ENCODE measurements at regions of chr1 and their contacts with region 1.

Region 1: GRCh38 chr1:167687919-167688519 is 33.8 kb upstream of the MPZL1 start:
- DNase-seq: peak; percentile 81
- H3K4me3 Mint-ChIP-seq: no peak overlapping the region
- H3K27ac Mint-ChIP-seq: peak overlapping the region; percentile 76
- H3K4me1 Mint-ChIP-seq: peaks cover 19% of the 10 kb centered on the region
- H3K27me3 Mint-ChIP-seq: no peaks in the 10 kb centered on the region

Region 2: DNA sequence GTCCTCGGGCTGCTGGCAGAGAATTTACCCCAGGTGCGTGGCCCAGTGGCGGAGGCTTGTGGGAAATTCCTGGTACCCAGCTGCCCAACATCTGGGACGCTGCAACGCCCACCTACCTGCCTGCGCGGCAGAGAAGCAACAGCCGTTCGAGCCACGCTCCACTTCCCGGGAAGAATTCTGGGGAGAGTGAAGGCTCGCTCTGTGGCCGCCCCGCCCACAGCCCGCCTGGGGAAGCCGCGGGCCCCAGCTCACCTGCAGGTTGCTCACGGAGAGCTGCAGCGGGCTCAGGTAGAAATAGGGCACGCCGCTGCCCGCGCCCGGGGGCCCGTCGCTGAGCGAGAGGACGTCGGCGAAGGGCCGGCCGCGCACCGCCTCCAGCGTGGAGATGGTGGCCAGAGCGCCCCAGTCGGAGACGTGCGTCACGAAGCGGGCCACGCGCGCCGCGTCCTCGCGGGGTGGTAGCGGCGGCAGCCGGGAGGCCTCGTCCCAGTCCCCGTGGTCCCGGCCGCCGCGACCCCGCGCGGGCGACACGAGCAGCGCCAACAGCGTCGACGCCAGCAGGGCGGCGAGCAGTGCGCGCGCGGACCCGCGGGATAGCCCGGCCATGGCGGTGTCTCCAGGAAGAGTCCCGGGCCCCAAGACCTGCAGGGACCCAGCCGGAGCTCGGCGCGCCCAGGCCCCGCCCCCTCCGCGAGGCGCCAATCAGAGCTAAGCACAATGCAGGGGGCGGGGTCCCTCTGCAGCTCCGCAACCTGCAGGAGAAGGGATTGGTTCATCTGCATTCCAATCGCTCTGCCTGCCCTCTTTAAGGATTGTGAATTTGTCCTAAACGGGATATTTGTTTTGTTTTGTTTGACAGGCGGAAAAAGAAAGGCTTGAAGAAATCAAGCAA is 134.6 kb before region 1 on chr1 and contains the start of gene CREG1:
- CTCF ChIA-PET with region 1: interaction called, 31 read pairs
- POLR2A ChIA-PET with region 1: interaction called, 3 read pairs
- intact Hi-C with region 1: loop called (anchors 1 kb)
- DNase-seq: peak; percentile 94
- H3K4me3 Mint-ChIP-seq: peak within 1 kb of the TSS; percentile 84
- H3K27ac Mint-ChIP-seq: no peak within 1 kb of the TSS
- H3K4me1 Mint-ChIP-seq: peaks cover 35% of the 10 kb centered on the region
- H3K27me3 Mint-ChIP-seq: no peaks in the 10 kb centered on the region
- total RNA-seq, gene CREG1: 13.5 to 14.6 TPM

Region 3: DNA sequence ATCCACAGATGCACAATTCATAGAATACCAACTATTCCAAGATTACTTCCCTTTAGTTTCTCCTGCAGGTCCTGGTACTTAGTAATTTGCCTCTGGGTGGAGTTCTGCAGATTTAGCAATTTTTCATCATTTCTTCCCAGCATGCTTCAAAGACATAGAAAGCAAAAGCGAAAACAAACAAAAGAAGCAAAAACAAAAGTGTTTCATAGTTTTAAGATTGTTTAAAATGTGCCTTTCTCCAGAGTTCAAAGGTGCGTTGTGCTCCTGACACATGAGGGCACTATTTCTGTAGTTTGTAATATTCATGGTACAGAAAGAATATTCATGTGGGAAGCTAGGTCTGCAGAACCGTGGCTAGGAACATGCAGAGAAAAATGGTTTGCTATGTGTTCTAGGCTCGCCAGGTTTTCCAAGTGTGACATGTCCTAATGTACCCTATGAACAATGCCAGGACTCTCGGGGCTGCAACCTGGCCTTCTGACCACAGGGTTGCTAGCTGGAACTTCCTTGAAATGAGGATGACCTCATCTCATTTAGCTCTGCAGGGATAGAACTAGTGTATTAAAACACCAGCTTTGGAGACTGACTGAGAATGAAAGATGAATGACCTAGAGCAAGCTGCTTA is 88.0 kb before region 1 on chr1:
- CTCF ChIA-PET with region 1: interaction called, 227 read pairs
- POLR2A ChIA-PET with region 1: interaction called, 14 read pairs
- intact Hi-C with region 1: loop called (anchors 1 kb)
- DNase-seq: peak; percentile 53
- H3K4me3 Mint-ChIP-seq: peak overlapping the region; percentile 61
- H3K27ac Mint-ChIP-seq: peak overlapping the region; percentile 64
- H3K4me1 Mint-ChIP-seq: peaks cover 37% of the 10 kb centered on the region
- H3K27me3 Mint-ChIP-seq: no peaks in the 10 kb centered on the region

Region 4: GRCh38 chr1:167627865-167628641 is 60.0 kb before region 1 on chr1:
- CTCF ChIA-PET with region 1: interaction called, 27 read pairs
- POLR2A ChIA-PET with region 1: interaction called, 5 read pairs
- intact Hi-C with region 1: loop called (anchors 2 kb)
- DNase-seq: peak; percentile 90
- H3K4me3 Mint-ChIP-seq: peak overlapping the region; percentile 92
- H3K27ac Mint-ChIP-seq: peak overlapping the region; percentile 99
- H3K4me1 Mint-ChIP-seq: peaks cover 46% of the 10 kb centered on the region
- H3K27me3 Mint-ChIP-seq: no peaks in the 10 kb centered on the region

Region 5: DNA sequence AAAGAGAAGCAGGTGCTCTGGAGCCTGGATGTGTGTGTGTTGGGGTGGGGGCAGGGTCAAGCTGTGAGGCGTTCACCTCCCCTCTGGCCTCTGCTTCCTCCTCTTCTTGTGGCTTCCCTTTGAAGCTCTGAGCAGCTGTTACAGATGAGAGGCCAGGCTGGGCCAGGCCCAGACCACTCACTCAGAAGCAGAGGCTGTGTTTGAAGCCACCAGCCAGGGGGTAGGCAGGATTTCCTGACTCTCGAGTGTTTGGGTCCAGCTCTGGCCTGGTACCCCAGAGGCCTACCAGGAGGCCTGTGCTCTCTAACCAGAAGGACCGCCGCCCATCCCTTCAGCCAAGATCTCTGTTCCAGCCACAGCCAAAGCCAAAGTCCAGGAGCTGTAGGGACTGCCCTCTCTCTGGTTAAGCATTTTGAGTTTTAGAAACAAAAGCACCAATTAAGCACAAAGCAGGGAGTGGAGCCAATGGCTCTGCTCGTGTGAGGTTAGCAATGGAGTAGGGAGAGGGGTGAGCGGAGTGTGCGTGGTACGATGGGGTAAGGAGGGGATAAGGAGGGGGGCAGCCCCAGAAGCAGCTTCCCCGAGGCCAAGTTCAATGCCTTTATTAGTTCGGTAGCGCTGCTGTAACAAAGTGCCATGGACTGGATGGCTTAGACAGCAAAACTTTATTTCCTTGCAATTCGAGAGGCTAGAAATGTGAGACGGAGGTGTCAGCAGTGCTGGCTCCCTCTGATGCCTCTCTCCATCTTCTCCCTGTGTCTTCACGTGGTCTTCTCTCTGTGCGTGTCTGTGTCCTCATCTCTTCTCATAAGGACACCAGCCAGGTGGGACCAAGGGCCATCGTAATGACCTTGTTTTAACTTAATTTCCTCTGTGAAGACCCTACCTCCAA is 37.5 kb before region 1 on chr1:
- CTCF ChIA-PET with region 1: interaction called, 9 read pairs
- POLR2A ChIA-PET with region 1: no interaction called
- intact Hi-C with region 1: loop called (anchors 2 kb)
- DNase-seq: peak; percentile 36
- H3K4me3 Mint-ChIP-seq: no peak overlapping the region
- H3K27ac Mint-ChIP-seq: peak overlapping the region; percentile 80
- H3K4me1 Mint-ChIP-seq: peaks cover 81% of the 10 kb centered on the region
- H3K27me3 Mint-ChIP-seq: no peaks in the 10 kb centered on the region

Region 6: GRCh38 chr1:167676205-167676915 is 11.7 kb before region 1 on chr1:
- CTCF ChIA-PET with region 1: interaction called, 38 read pairs
- POLR2A ChIA-PET with region 1: interaction called, 3 read pairs
- intact Hi-C with region 1: no loop called
- DNase-seq: peak; percentile 52
- H3K4me3 Mint-ChIP-seq: no peak overlapping the region
- H3K27ac Mint-ChIP-seq: peak overlapping the region; percentile 67
- H3K4me1 Mint-ChIP-seq: peaks cover 45% of the 10 kb centered on the region
- H3K27me3 Mint-ChIP-seq: no peaks in the 10 kb centered on the region

Region 7: DNA sequence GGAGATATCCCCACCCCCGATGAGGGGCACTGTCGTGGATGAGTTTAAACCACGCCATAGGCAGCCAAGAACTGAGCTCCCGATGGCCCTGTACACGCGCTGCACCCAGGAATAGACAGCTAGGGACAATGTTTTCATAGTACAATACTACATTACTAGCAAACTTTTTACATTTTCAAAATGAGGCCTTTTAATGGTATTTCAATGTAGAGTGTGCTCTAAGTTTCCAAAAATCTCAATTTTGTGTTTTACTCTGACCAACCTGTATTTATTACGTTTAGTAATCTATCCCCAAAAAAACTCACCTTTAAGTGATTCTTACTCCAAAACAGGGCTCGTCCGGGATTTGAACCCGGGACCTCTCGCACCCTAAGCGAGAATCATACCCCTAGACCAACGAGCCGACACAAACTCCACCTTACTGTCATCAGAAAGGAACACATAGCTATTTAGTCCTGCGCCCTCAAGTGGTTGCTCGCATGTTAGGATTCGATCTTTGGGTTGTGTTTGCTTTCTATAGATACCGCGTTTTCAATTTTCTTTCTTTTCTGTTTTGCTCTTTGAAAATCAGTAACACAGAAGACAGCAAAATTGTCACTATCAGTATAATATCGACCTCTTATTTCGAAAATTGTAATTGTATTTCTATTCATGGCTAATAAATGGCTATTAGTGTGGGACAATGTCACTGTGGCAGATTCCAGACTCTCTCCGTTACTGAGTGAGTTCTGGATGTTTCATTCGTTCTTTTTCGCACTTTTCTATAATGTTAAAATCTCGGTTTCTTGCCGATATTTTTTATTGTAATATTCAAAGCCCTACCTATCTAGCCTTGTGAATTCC is 27.4 kb after region 1 on chr1:
- CTCF ChIA-PET with region 1: interaction called, 6 read pairs
- POLR2A ChIA-PET with region 1: no interaction called
- intact Hi-C with region 1: loop called (anchors 2 kb)
- DNase-seq: peak; percentile 93
- H3K4me3 Mint-ChIP-seq: peak overlapping the region; percentile 80
- H3K27ac Mint-ChIP-seq: peak overlapping the region; percentile 93
- H3K4me1 Mint-ChIP-seq: peaks cover 35% of the 10 kb centered on the region
- H3K27me3 Mint-ChIP-seq: peaks cover 7% of the 10 kb centered on the region

Measured in activated CD4-positive, alpha-beta memory T cell treated with anti-CD3 and anti-CD28 coated beads for 36 hours (primary cell).